BJ (cell line): ENCODE measurements at regions of chr7 and their contacts with region 1.

Region 1: GRCh38 chr7:135672560-135673359 is 10.4 kb downstream of the STMP1 start:
- DNase-seq: no peak
- H3K4me3 ChIP-seq: no peak overlapping the region
- H3K27me3 ChIP-seq: no peaks in the 10 kb centered on the region
- CTCF ChIP-seq: peak; percentile 84

Region 2: GRCh38 chr7:135684136-135684535 is 11.4 kb after region 1 on chr7:
- CTCF ChIA-PET with region 1: interaction called, 39 read pairs
- POLR2A ChIA-PET with region 1: no interaction called
- DNase-seq: no peak
- H3K4me3 ChIP-seq: no peak overlapping the region
- H3K27me3 ChIP-seq: no peaks in the 10 kb centered on the region
- CTCF ChIP-seq: no peak

Region 3: DNA sequence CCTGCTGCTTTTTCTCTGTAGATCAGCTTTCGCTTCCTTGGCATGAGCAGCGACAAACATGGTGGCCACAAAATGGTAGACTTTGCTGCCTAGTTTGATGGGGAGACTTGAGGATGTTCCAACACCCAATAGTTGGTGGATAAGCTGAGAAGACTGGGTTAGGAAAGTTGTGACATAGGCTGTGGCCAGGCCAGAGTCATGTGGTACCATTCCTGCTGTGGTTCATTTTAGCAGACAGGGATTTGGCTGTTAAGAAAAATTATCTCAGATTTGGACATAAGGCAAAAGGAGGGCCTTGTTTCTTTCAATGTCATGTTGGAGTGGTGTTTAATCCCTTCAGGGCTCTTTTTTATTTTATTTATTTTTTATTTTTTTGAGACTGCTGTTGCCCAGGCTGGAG is 102.5 kb after region 1 on chr7:
- CTCF ChIA-PET with region 1: interaction called, 3 read pairs
- POLR2A ChIA-PET with region 1: interaction called, 10 read pairs
- DNase-seq: no peak
- H3K4me3 ChIP-seq: no peak overlapping the region
- H3K27me3 ChIP-seq: no peaks in the 10 kb centered on the region
- CTCF ChIP-seq: no peak